Dendritic cell treated with granulocyte-macrophage colony-stimulating factor and Interleukin-4, amounts not matched to agents 40 ng/mL and 50 ng/mL, for 4 days (primary cell): ENCODE measurements at regions of chr9 and their contacts with region 1.

Region 1: DNA sequence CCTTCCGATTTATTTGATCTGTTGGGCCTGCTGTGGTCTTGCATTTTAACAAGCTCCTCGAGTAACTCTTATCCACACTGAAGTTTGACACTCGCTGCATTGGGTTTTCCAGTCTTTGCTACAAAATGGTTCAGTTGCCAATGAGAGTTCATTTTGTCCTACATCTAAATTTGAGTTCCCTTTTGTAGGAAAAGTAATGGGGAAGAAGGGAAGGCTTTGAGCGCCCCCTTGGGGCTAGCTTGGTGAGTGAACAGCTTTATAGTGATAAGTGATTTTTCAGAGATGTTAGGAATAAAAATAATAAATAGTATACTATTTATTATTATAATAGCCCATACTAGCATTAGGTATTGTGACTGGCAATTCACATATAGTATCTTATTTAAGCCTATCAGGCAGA is 89.9 kb upstream of the GNAQ start:
- H3K4me3 Mint-ChIP-seq: no peak overlapping the region
- H3K27ac Mint-ChIP-seq: peak overlapping the region; percentile 77
- H3K4me1 Mint-ChIP-seq: peaks cover 41% of the 10 kb centered on the region
- H3K27me3 Mint-ChIP-seq: peaks cover 13% of the 10 kb centered on the region

Region 2: GRCh38 chr9:77433675-77434445 is 687.6 kb before region 1 on chr9:
- intact Hi-C with region 1: loop called (anchors 5 kb)
- H3K4me3 Mint-ChIP-seq: no peak overlapping the region
- H3K27ac Mint-ChIP-seq: no peak overlapping the region
- H3K4me1 Mint-ChIP-seq: peaks cover 6% of the 10 kb centered on the region
- H3K27me3 Mint-ChIP-seq: no peaks in the 10 kb centered on the region

Region 3: GRCh38 chr9:77456829-77457437 is 664.6 kb before region 1 on chr9:
- intact Hi-C with region 1: loop called (anchors 5 kb)
- H3K4me3 Mint-ChIP-seq: no peak overlapping the region
- H3K27ac Mint-ChIP-seq: no peak overlapping the region
- H3K4me1 Mint-ChIP-seq: peaks cover 20% of the 10 kb centered on the region
- H3K27me3 Mint-ChIP-seq: no peaks in the 10 kb centered on the region

Region 4: DNA sequence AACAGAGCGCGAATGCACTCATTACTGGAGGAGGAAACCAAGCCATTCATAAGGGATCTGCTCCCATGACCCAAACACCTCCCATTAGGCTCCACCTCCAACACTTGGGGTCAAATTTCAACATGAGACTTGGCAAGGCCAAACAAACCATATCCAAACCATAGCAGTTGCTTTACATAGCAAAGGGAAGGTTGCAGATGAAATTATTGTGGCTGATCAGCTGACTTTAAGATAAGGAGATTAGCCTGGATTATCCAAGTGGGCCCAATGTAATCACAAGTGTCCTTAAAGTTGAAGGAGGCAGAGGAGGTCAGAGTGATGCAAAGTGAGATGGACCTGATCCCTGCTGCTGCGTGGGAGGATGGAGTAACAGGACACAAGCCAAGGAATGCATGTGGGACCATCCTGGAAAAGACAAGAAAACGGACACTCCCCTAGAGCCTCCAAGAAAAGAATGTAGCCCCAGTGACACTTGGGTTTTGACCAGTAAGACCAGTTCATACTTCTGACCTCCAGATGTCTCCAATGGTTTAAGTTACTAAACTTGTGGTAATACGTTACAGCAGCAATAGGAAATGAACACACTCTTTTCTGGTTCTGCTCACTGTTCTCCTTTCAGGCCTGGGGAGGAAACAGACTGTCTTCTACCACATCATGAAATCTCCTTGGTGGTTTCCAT is 257.1 kb before region 1 on chr9:
- intact Hi-C with region 1: loop called (anchors 5 kb)
- H3K4me3 Mint-ChIP-seq: no peak overlapping the region
- H3K27ac Mint-ChIP-seq: peak overlapping the region; percentile 47
- H3K4me1 Mint-ChIP-seq: peaks cover 36% of the 10 kb centered on the region
- H3K27me3 Mint-ChIP-seq: no peaks in the 10 kb centered on the region

Region 5: GRCh38 chr9:77977210-77977611 is 144.3 kb before region 1 on chr9:
- intact Hi-C with region 1: loop called (anchors 1 kb)
- H3K4me3 Mint-ChIP-seq: no peak overlapping the region
- H3K27ac Mint-ChIP-seq: peak overlapping the region; percentile 80
- H3K4me1 Mint-ChIP-seq: peaks cover 65% of the 10 kb centered on the region
- H3K27me3 Mint-ChIP-seq: no peaks in the 10 kb centered on the region

Region 6: GRCh38 chr9:78035383-78035993 is 86.0 kb before region 1 on chr9:
- intact Hi-C with region 1: loop called (anchors 2 kb)
- H3K4me3 Mint-ChIP-seq: no peak overlapping the region
- H3K27ac Mint-ChIP-seq: peak overlapping the region; percentile 61
- H3K4me1 Mint-ChIP-seq: peaks cover 48% of the 10 kb centered on the region
- H3K27me3 Mint-ChIP-seq: no peaks in the 10 kb centered on the region

Region 7: DNA sequence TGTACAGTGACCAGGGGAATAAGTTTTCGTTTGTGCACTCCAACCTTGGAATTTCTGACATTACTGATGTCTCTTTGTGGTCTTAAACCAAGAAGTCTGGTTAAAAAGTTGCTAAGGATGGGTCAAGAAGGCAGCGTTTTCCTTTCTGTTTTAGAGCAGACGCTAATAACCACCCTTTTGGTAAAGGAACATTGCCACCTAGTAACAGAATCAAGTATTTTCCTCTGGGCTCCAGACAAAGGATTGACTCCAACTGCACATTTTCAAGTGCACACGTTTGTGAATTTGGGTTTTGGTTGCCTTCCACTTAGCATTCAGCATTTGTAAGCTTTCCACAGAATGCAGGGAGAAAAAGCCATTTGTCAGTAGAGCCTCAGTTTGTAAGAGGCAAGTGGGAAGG is 92.2 kb after region 1 on chr9:
- intact Hi-C with region 1: loop called (anchors 5 kb)
- H3K4me3 Mint-ChIP-seq: no peak overlapping the region
- H3K27ac Mint-ChIP-seq: no peak overlapping the region
- H3K4me1 Mint-ChIP-seq: peaks cover 6% of the 10 kb centered on the region
- H3K27me3 Mint-ChIP-seq: no peaks in the 10 kb centered on the region

Region 8: DNA sequence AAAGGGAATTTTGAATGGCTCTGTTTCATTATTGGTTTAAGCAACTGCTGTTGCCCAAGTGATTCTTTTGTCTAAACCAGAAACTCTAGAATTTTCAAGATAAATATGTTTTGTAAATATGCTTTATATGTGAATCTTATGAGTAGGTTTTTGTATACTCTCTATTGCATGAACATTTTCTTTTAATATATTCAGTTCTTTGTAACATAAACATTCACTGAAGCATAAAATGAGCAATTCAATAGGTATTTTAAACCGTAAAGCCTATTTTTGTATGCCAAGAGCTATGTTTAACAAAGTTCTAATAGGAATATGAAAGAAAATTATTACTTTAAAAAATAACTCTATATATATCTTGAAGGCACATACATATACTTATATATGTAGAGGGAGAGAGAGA is 468.6 kb after region 1 on chr9:
- intact Hi-C with region 1: no loop called
- H3K4me3 Mint-ChIP-seq: no peak overlapping the region
- H3K27ac Mint-ChIP-seq: no peak overlapping the region
- H3K4me1 Mint-ChIP-seq: no peaks in the 10 kb centered on the region
- H3K27me3 Mint-ChIP-seq: no peaks in the 10 kb centered on the region